Caco-2 (cell line): ENCODE measurements at regions of chr15 and their contacts with region 1.

Region 1: GRCh38 chr15:44066316-44066740 is 128.7 kb downstream of the FRMD5 start:
- DNase-seq: peak; percentile 51 to 69
- H3K4me3 ChIP-seq: no peak overlapping the region
- H3K4me3 Mint-ChIP-seq: no peak overlapping the region
- H3K27ac Mint-ChIP-seq: peak overlapping the region; percentile 1
- H3K4me1 ChIP-seq: no peaks in the 10 kb centered on the region
- H3K4me1 Mint-ChIP-seq: peaks cover 11% of the 10 kb centered on the region
- H3K27me3 ChIP-seq: no peaks in the 10 kb centered on the region
- H3K27me3 Mint-ChIP-seq: no peaks in the 10 kb centered on the region
- CTCF ChIP-seq: peak; percentile 68 to 70

Region 2: DNA sequence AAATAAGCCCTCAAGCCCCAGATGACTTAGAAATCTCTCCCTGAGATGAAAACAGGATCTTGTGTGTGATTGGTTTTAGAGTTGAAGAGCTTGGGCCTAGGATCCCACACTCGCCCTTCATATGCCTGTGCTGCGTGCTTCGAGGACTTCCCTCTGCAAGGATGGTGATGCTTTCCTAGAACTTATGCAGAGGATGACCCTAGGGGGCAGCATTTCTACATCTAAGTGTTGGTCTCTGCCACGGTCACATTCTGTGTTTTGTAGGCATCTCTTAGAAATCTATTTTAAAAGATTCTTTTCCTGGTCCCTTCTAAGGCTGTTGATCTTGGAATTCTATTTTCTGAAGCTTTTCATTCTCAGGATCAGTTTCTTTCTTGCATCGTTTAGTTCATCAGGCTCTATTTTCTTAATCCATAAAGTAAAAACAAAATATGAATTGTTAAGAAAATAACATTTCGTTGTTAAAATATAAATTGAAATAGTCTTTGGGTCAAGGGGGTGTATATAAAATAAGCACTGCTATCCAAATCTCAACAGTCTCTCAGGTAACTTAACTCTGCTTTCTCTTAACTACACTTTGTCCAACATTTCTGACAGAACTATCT is 193.8 kb before region 1 on chr15:
- CTCF ChIA-PET with region 1: no interaction called
- POLR2A ChIA-PET with region 1: no interaction called
- intact Hi-C with region 1: loop called (anchors 1 kb)
- DNase-seq: peak; percentile 56 to 72
- H3K4me3 ChIP-seq: no peak overlapping the region
- H3K4me3 Mint-ChIP-seq: no peak overlapping the region
- H3K27ac Mint-ChIP-seq: no peak overlapping the region
- H3K4me1 ChIP-seq: peaks cover 11% of the 10 kb centered on the region
- H3K4me1 Mint-ChIP-seq: peaks cover 10% of the 10 kb centered on the region
- H3K27me3 ChIP-seq: no peaks in the 10 kb centered on the region
- H3K27me3 Mint-ChIP-seq: no peaks in the 10 kb centered on the region
- CTCF ChIP-seq: peak; percentile 67 to 68

Region 3: DNA sequence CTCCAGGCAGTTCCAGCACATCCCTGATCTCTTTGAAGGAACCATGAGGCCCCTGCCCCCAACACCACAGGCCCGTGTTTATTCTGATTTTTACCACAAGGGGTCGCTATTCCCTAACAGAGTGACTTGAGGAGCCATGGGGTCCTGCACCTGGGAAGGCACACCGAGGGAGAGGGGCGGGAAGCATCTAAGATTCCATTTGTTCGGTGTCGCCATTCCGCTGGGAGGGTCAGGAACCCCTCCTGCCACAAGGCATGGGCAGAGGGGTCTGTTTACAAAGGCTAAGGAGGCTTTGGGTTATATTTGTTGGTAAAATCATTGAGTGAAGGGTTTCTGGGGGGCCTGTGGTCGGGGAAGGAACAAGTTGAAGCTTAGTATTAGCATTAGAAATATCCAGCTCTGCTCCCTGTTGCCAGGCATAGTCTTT is 162.5 kb before region 1 on chr15:
- CTCF ChIA-PET with region 1: interaction called, 9 read pairs
- POLR2A ChIA-PET with region 1: no interaction called
- intact Hi-C with region 1: loop called (anchors 1 kb)
- DNase-seq: peak; percentile 68 to 82
- H3K4me3 ChIP-seq: no peak overlapping the region
- H3K4me3 Mint-ChIP-seq: no peak overlapping the region
- H3K27ac Mint-ChIP-seq: peak overlapping the region; percentile 58
- H3K4me1 ChIP-seq: no peaks in the 10 kb centered on the region
- H3K4me1 Mint-ChIP-seq: peaks cover 6% of the 10 kb centered on the region
- H3K27me3 ChIP-seq: no peaks in the 10 kb centered on the region
- H3K27me3 Mint-ChIP-seq: no peaks in the 10 kb centered on the region
- CTCF ChIP-seq: peak; percentile 65 to 94

Region 4: GRCh38 chr15:43941555-43941954 is 124.8 kb before region 1 on chr15:
- CTCF ChIA-PET with region 1: no interaction called
- POLR2A ChIA-PET with region 1: no interaction called
- intact Hi-C with region 1: loop called (anchors 1 kb)
- DNase-seq: no peak
- H3K4me3 ChIP-seq: no peak overlapping the region
- H3K4me3 Mint-ChIP-seq: no peak overlapping the region
- H3K27ac Mint-ChIP-seq: no peak overlapping the region
- H3K4me1 ChIP-seq: no peaks in the 10 kb centered on the region
- H3K4me1 Mint-ChIP-seq: no peaks in the 10 kb centered on the region
- H3K27me3 ChIP-seq: no peaks in the 10 kb centered on the region
- H3K27me3 Mint-ChIP-seq: no peaks in the 10 kb centered on the region
- CTCF ChIP-seq: no peak

Region 5: GRCh38 chr15:44219073-44219472 is 152.7 kb after region 1 on chr15:
- CTCF ChIA-PET with region 1: no interaction called
- POLR2A ChIA-PET with region 1: no interaction called
- intact Hi-C with region 1: loop called (anchors 1 kb)
- DNase-seq: no peak
- H3K4me3 ChIP-seq: no peak overlapping the region
- H3K4me3 Mint-ChIP-seq: no peak overlapping the region
- H3K27ac Mint-ChIP-seq: no peak overlapping the region
- H3K4me1 ChIP-seq: peaks cover 19% of the 10 kb centered on the region
- H3K4me1 Mint-ChIP-seq: peaks cover 6% of the 10 kb centered on the region
- H3K27me3 ChIP-seq: no peaks in the 10 kb centered on the region
- H3K27me3 Mint-ChIP-seq: no peaks in the 10 kb centered on the region
- CTCF ChIP-seq: no peak

Region 6: DNA sequence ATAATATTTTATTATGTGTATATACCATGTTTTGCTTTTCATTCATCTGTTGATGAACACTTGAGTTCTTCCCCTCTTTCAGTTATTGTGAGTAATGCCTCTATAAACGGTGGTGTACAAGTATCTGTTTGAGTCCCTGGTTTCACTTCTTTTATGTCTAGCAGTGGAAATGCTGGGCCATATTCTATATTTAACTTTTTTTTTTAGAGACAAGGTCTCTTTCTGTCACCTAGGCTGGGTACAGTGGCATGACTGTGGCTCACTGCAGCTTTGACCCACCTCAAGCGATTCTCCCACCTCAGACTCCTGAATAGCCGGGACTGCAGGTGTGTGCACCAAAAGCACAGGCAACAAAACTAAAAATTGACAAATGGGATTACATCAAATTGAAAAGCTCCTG is 242.1 kb after region 1 on chr15:
- CTCF ChIA-PET with region 1: no interaction called
- POLR2A ChIA-PET with region 1: no interaction called
- intact Hi-C with region 1: no loop called
- DNase-seq: no peak
- H3K4me3 ChIP-seq: no peak overlapping the region
- H3K4me3 Mint-ChIP-seq: no peak overlapping the region
- H3K27ac Mint-ChIP-seq: no peak overlapping the region
- H3K4me1 ChIP-seq: no peaks in the 10 kb centered on the region
- H3K4me1 Mint-ChIP-seq: no peaks in the 10 kb centered on the region
- H3K27me3 ChIP-seq: no peaks in the 10 kb centered on the region
- H3K27me3 Mint-ChIP-seq: no peaks in the 10 kb centered on the region
- CTCF ChIP-seq: no peak